ENCODE measurements at regions of chr5 and their contacts with region 1.

Region 1: GRCh38 chr5:150217873-150218692 is 28.2 kb downstream of the SLC6A7 start:
- DNase-seq: peak; percentile 78 to 92 (median 84)
- H3K4me3 ChIP-seq: no peak overlapping the region
- H3K27ac ChIP-seq: no peak overlapping the region
- H3K4me1 ChIP-seq: no peaks in the 10 kb centered on the region
- H3K27me3 ChIP-seq: peaks cover 5% of the 10 kb centered on the region
- CTCF ChIP-seq: peak; percentile 87 to 95 (median 94)
- POLR2A ChIP-seq: no peak

Region 2: DNA sequence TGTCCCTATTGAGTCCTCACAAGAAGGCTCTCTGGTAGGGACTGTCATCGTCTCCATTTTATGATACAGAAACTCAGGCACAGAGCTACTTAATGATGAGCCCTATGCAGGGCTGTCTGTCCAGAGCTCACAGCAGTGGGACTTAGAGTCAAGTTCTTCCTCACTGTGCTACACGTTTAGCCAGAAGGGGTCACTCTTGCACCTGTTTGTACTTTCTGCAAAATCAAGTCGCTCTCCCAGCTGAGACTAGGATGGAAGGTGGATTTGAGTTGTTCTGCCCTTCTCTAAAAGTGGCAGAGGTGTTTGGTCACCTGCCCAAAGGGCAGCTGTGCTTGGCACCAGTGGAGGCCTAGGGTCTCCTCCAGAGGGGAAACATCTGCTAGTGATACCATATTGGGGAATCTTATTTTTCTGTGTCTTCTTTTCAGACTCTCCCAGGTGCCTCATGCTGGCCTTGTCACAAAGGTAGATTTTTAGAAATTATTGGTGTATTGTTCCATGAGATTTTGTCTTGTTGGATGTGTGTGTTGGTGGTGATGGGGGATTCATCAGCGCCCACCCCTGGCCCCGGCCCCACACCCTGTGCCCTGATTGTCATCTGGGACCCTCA is 383.7 kb before region 1 on chr5:
- intact Hi-C with region 1: loop called (anchors 5 to 10 kb)
- DNase-seq: peak; percentile 72 to 91 (median 78)
- H3K4me3 ChIP-seq: no peak overlapping the region
- H3K27ac ChIP-seq: no peak overlapping the region
- H3K4me1 ChIP-seq: peaks cover 4 to 8% of the 10 kb centered on the region in 2 donors
- H3K27me3 ChIP-seq: no peaks in the 10 kb centered on the region
- CTCF ChIP-seq: peak; percentile 53 to 79 (median 76)
- POLR2A ChIP-seq: no peak

Region 3: GRCh38 chr5:150129813-150130492 is 88.1 kb before region 1 on chr5:
- intact Hi-C with region 1: loop called (anchors 5 kb)
- DNase-seq: peak; percentile 73 to 89 (median 81)
- H3K4me3 ChIP-seq: no peak overlapping the region
- H3K27ac ChIP-seq: peak overlapping the region in 1 of 5 donors; percentile 39
- H3K4me1 ChIP-seq: no peaks in the 10 kb centered on the region
- H3K27me3 ChIP-seq: no peaks in the 10 kb centered on the region
- CTCF ChIP-seq: peak; percentile 91 to 97 (median 95)
- POLR2A ChIP-seq: no peak

Region 4: DNA sequence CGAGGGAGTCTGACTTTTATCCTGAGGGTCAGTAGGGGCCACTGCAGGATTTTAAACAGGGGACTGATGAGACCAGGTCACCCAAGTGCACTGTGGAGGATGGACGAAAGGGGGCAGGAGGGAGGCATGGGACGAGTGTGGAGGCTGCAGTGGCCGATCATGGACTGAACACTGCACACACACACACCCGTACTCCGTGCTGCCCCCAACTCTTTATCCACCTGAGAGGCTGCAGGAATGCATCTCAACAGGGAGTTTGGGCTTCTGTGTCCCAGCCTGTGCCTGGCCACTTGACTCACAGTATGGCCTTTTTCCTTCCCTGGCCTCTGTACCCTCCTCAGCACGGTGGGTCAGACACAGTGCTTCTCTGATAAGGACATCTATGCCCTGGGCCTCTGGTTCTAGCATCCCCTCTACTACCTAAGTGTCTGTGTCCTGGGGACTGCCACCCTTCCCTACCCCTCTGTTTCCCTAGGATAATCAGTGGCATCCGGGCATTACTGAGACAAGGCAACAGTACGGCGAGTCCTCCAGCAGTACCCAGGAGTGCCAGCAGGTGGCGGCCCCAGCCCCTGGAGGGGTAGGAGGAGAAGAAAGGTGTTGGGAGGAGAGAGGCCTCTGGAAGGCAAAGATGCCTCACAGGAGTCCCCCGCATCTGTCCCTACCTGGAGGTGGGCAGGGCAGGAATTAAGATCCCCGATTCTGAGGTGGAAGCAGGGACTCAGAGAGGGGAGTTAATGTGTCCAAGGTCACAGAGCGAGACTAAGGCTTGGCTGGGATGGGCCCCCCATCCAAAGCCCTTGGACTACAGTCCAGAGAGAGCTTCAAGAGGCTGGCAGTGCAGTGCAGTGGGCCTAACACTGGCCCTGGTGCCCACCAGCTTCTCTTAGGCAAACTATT is 56.6 kb before region 1 on chr5:
- intact Hi-C with region 1: loop called (anchors 5 kb)
- DNase-seq: peak; percentile 76 to 91 (median 80)
- H3K4me3 ChIP-seq: no peak overlapping the region
- H3K27ac ChIP-seq: peak overlapping the region in 1 of 5 donors; percentile 85
- H3K4me1 ChIP-seq: peaks cover 1% of the 10 kb centered on the region in 2 donors
- H3K27me3 ChIP-seq: peaks cover 2% of the 10 kb centered on the region
- CTCF ChIP-seq: peak; percentile 87 to 95 (median 91)
- POLR2A ChIP-seq: no peak